ENCODE measurements at regions of chrX and their contacts with region 1.

Region 1: GRCh38 chrX:155056877-155057792 is 13.8 kb downstream of the CMC4 start:
- DNase-seq: peak in 41 of 42 donors; percentile 23 to 83 (median 60)

Region 2: DNA sequence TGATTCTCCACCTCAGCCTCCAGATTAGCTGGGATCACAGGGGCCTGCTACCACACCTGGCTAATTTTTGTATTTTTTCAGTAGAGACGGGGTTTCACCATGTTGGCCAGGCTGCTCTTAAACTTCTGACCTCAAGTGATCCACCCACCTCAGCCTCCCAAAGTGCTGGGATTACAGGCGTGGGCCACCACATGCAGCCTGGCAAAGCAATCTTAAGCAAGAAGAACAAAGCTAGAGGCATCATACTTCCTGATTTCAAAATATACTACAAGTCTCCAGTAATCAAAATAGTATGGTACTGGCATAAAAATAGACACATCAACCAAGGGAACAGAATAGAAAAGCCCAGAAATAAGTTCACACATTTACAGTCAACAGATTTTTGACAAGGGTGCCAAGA is 183.8 kb before region 1 on chrX:
- intact Hi-C with region 1: no loop called
- DNase-seq: no peak

Region 3: DNA sequence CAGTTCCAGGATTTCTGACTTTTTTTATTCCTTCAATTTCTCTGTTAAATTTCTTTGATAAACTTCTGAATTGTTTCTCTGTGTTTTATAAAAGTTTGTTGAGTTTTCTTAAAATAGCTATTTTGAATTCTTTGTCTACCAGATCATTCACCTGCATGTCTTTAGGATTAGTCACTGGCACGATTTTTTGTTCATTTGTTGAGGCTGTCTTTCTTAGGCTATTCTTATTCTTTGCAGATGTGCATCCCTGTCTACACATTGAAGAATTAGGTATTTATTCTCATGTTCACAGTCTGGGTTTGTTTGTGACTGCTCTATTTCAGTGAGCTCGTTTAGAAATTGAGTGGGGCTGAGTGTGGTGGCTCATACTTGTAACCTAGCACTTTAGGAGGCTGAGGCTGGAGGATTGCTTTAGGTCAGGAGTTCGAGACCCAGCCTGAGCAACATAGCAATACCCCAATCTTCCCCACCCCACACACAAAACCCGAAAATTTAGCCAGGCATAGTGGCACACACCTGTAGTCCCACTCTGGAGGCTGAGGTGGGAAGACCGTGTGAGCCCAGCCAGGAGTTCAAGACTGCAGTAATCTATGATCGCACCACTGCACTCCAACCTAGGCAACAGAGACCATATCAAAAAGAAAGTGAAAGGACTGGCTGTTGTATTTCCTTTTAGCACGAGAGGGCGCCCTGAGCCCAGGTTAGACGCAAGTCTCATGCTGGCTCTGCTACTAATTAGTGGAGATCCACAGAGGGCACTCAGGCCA is 76.6 kb before region 1 on chrX:
- intact Hi-C with region 1: loop called (anchors 10 kb)
- DNase-seq: peak; percentile 12 to 88 (median 68)

Region 4: GRCh38 chrX:155216179-155216939 is 159.2 kb after region 1 on chrX and contains the start of gene VBP1:
- intact Hi-C with region 1: no loop called
- DNase-seq: peak; percentile 83 to 98 (median 93)

Measured in head of caudate nucleus (tissue), 42 donors.